ENCODE measurements at regions of chr18 and their contacts with region 1.

Region 1: DNA sequence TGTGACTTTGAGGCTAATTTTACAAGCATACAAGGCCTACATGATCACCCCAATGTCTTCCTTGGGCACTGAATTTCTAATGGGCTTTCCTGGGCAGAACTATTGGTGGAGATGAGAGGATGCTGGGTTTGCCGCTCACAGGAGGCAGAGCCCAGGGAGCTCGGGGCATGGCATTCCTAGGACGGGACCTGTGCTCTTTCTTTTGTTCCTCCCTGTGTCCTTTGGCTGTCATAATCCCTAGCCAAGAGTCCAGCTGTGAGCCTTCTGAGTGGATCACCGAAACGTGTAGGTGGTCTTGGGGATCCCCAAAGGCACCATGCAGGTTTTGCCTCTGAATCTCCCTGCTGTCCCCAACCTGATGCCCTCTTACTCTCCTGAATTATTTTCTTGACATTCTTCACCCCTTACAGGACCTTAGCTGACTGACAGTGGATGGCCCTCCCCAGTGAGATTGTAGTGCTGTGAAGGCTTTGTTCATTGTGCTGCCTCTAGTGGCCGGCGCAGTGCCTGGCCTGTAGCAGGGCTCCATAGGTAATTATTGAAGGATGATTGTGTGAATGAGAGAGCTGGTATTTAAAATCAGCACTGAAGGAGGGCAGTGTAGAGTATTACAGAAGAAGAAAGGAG is 221.9 kb downstream of the ZNF407 start:
- DNase-seq: no peak
- ATAC-seq: peak; percentile 100
- H3K4me3 ChIP-seq: no peak overlapping the region
- H3K27ac ChIP-seq: no peak overlapping the region
- H3K4me1 ChIP-seq: no peaks in the 10 kb centered on the region
- H3K27me3 ChIP-seq: no peaks in the 10 kb centered on the region
- CTCF ChIP-seq: peak; percentile 44 to 78 (median 66)
- EP300 ChIP-seq: no peak
- POLR2A ChIP-seq: no peak
- RAD21 ChIP-seq: peak; percentile 41

Region 2: GRCh38 chr18:74773171-74773624 is 46.3 kb before region 1 on chr18:
- CTCF ChIA-PET with region 1: interaction called, 11 read pairs
- POLR2A ChIA-PET with region 1: no interaction called
- RAD21 ChIA-PET with region 1: no interaction called
- SMC1A ChIA-PET with region 1: interaction called, 6 read pairs
- in situ Hi-C with region 1: no loop called
- intact Hi-C with region 1: no loop called
- DNase-seq: peak; percentile 53
- ATAC-seq: peak; percentile 90
- H3K4me3 ChIP-seq: no peak overlapping the region
- H3K27ac ChIP-seq: no peak overlapping the region
- H3K4me1 ChIP-seq: peaks cover 12% of the 10 kb centered on the region
- H3K27me3 ChIP-seq: no peaks in the 10 kb centered on the region
- CTCF ChIP-seq: no peak
- EP300 ChIP-seq: peak in 1 of 2 experiments; percentile 75; a peak in 2 of 4 replicates
- POLR2A ChIP-seq: no peak
- RAD21 ChIP-seq: no peak

Region 3: DNA sequence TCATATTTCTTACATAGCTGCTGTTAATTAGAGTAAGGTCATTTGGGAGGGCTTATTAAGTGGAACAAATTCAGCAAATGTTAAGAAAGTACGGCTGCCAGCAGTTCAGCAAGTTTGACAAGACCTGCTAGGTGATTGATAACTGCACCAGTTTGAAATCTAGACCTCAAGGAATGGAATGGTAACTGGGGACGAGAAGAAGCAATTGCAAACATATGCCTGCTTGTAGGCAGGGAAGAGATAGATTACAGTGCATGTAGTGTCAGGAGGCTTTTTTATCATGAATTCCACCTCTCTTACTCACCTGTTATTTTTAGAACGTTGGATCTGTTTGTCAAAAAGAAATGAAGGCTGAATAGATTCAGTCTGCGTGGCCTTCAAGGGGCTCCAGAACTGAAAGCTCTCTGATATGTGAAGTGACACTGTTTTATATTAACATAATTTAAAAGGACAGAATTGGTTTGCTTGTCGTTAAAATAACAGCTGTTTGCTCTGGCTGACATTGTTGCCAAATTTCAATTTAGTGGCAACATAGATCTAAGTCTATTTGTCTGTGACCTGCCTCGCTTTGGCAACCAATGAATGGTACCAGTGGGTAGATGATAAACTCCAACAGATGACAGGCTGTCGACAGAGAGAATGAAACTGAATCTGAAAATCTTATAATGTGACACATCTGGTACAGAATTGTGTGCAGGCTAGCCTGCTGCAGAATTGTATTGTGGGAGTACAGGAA is 22.5 kb before region 1 on chr18:
- CTCF ChIA-PET with region 1: interaction called, 12 read pairs
- POLR2A ChIA-PET with region 1: no interaction called
- RAD21 ChIA-PET with region 1: no interaction called
- SMC1A ChIA-PET with region 1: interaction called, 5 read pairs
- in situ Hi-C with region 1: no loop called
- intact Hi-C with region 1: loop called (anchors 1 kb)
- DNase-seq: peak; percentile 40
- ATAC-seq: peak; percentile 99
- H3K4me3 ChIP-seq: peak overlapping the region; percentile 51
- H3K27ac ChIP-seq: 0 out of 2 replicates have a peak overlapping the region, but pooled peaks have one; percentile 17
- H3K4me1 ChIP-seq: peaks cover 16% of the 10 kb centered on the region; the same call in 1 of the 2 replicates
- H3K27me3 ChIP-seq: no peaks in the 10 kb centered on the region
- CTCF ChIP-seq: no peak
- EP300 ChIP-seq: no peak; a peak in 1 of 4 replicates
- POLR2A ChIP-seq: no peak
- RAD21 ChIP-seq: no peak

Region 4: GRCh38 chr18:74806700-74807416 is 12.7 kb before region 1 on chr18:
- CTCF ChIA-PET with region 1: interaction called, 12 read pairs
- POLR2A ChIA-PET with region 1: no interaction called
- RAD21 ChIA-PET with region 1: interaction called, 4 read pairs
- SMC1A ChIA-PET with region 1: interaction called, 13 read pairs
- in situ Hi-C with region 1: no loop called
- intact Hi-C with region 1: no loop called
- DNase-seq: peak; percentile 73
- ATAC-seq: peak; percentile 98
- H3K4me3 ChIP-seq: peak overlapping the region; percentile 35; the same call in 1 of the 2 replicates
- H3K27ac ChIP-seq: peak overlapping the region; percentile 82
- H3K4me1 ChIP-seq: peaks cover 19% of the 10 kb centered on the region
- H3K27me3 ChIP-seq: no peaks in the 10 kb centered on the region
- CTCF ChIP-seq: no peak
- EP300 ChIP-seq: peak in 1 of 2 experiments; percentile 77; a peak in 2 of 4 replicates
- POLR2A ChIP-seq: no peak
- RAD21 ChIP-seq: no peak

Measured in GM12878 (cell line).